GM10248 (cell line): ENCODE measurements at regions of chr11 and their contacts with region 1.

Region 1: DNA sequence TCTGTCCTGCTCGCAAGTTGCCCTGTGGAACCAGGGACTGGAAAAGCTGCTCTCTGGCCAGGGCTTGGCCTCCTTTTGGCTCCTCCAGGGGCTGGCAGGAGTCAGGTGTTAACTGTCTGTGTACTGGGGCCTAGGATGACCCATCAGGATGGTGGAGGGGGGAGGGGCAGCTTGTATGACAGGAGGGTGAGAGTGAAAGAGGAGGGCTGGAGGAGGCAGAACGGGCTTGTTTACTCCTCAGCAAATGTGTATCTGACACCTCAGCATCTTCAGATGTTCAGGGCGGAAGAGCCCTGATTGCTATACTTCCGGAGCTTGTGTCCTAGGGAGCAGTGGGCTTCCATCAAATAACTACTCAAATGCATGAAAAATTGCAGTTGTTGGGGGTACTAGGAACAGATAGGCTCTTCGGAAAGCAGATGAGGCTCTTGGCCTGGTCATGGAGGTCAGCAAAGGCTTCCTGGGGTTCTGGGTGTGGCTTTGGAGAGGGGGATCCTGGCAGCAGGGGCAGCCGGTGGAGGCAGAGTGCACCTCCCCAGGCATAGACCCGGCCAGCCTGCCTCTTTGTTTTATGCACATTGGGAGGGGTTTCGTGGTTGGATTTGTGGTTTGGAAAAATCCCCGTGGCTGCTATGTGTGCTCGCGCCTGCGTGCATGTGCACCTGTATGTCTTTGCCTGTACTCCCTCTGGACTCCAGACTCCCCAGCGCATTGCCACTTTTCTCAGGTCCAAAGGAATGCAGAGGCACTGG is 31.2 kb downstream of the CD82 start:
- DNase-seq: peak; percentile 68
- CTCF ChIP-seq: no peak

Region 2: GRCh38 chr11:44565211-44565952 is 31.3 kb before region 1 on chr11 and contains the start of gene CD82:
- CTCF ChIA-PET with region 1: interaction called, 186 read pairs
- POLR2A ChIA-PET with region 1: interaction called, 5 read pairs
- DNase-seq: peak; percentile 98
- CTCF ChIP-seq: no peak

Region 3: DNA sequence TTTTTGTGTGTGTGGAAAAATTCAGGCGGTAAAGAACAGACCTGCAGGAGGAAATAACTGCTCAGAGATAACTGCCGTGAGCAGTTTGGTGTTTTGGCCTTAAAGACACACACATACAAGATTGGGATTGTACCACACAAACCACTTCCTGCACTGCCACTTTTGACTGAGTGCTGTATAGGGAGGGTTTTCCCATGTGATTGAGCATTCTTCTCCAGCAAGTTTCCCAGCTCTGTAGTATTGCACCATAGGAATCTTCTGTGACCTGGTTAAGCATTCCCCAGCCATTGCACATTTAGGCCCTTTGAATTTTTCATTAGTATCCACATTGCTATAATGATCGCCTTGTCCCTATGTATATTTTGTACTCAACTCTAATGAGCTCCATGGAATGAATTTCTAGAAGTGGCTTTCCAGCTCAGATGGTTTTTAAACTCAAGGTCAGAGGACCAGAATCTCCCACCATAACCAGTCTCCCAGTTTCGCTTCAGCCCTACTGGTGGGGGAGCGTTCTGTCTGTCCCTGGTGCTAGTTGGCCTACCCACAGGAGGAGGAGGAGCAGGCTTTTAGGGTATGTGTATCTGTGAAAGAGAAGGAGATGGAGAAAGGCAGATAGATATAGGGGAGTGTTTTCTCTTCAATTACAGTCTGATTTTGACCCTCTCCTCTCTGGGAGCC is 22.0 kb before region 1 on chr11:
- CTCF ChIA-PET with region 1: interaction called, 15 read pairs
- POLR2A ChIA-PET with region 1: interaction called, 4 read pairs
- DNase-seq: no peak
- CTCF ChIP-seq: no peak

Region 4: DNA sequence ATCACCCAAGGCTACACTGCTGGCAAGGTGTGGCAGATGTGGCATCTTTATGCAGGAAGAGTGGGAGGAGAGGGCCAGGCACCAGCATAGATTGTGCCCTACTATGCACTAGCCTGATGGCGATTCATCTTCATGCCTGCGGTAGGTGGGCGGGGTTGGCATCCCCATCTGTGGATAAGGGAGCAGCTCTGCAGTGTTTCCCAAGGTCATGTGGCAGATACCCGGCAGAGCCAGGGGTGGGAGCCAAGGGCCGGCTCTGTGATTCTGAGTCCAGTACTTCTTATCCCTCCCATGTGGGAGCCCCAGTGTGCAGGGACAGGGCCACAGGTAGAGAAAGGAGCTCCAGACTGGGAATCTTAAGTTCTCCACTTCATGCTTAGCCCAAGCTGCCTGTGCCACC is 11.3 kb before region 1 on chr11:
- CTCF ChIA-PET with region 1: interaction called, 13 read pairs
- POLR2A ChIA-PET with region 1: no interaction called
- DNase-seq: no peak
- CTCF ChIP-seq: no peak

Region 5: GRCh38 chr11:44611687-44612434 is 15.2 kb after region 1 on chr11:
- CTCF ChIA-PET with region 1: interaction called, 38 read pairs
- POLR2A ChIA-PET with region 1: interaction called, 8 read pairs
- DNase-seq: peak; percentile 77
- CTCF ChIP-seq: no peak

Region 6: DNA sequence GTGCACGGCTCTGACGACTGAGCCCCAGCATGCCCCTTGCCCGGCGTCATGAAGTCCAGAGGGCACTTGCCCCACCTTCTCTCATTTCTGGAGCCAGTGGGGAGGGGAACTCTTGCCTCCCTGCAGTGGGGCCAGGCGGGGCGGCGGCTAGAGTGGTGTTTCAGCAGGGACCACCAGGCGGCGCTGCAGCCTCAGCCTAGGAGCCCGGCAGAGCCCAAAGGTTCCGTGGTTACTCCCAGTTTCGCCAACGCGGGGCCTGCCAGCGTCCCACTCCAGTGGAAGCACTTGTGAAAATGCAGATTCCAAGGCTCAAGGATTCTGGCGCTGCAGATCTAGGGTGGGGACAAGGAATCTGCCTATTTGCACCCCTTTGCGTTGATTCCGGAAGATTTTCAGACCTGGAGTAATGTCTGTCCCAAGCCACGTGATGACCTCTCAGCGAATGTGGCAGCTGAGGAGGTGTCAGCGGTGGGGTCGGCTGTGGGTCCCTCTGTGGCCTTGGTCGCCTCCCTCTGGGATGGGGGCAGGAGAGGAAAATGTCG is 24.5 kb after region 1 on chr11:
- CTCF ChIA-PET with region 1: interaction called, 17 read pairs
- POLR2A ChIA-PET with region 1: interaction called, 4 read pairs
- DNase-seq: peak; percentile 74
- CTCF ChIP-seq: peak; percentile 89